Activated CD4-positive, alpha-beta T cell treated with anti-CD3 and anti-CD28 coated beads, Interleukin-2, amount 10 ng/mL, durations not matched to agents 24 days and 14 days (primary cell): ENCODE measurements at regions of chr1 and their contacts with region 1.

Region 1: GRCh38 chr1:26787706-26788514 is at the start of gene PIGV:
- DNase-seq: peak; percentile 97
- H3K4me3 Mint-ChIP-seq: peak within 1 kb of the TSS; percentile 100
- H3K27ac Mint-ChIP-seq: peak within 1 kb of the TSS; percentile 100
- H3K4me1 Mint-ChIP-seq: peaks cover 67% of the 10 kb centered on the region
- H3K27me3 Mint-ChIP-seq: no peaks in the 10 kb centered on the region
- total RNA-seq, gene PIGV: 15.2 and 16.0 TPM in 2 replicates

Region 2: GRCh38 chr1:26500488-26501175 is 287.3 kb before region 1 on chr1:
- intact Hi-C with region 1: loop called (anchors 2 kb)
- DNase-seq: peak; percentile 97
- H3K4me3 Mint-ChIP-seq: peak overlapping the region; percentile 92
- H3K27ac Mint-ChIP-seq: peak overlapping the region; percentile 95
- H3K4me1 Mint-ChIP-seq: peaks cover 13% of the 10 kb centered on the region
- H3K27me3 Mint-ChIP-seq: no peaks in the 10 kb centered on the region

Region 3: GRCh38 chr1:26602378-26602959 is 185.4 kb before region 1 on chr1:
- intact Hi-C with region 1: loop called (anchors 1 kb)
- DNase-seq: peak; percentile 89
- H3K4me3 Mint-ChIP-seq: no peak overlapping the region
- H3K27ac Mint-ChIP-seq: no peak overlapping the region
- H3K4me1 Mint-ChIP-seq: peaks cover 9% of the 10 kb centered on the region
- H3K27me3 Mint-ChIP-seq: peaks cover 3% of the 10 kb centered on the region

Region 4: DNA sequence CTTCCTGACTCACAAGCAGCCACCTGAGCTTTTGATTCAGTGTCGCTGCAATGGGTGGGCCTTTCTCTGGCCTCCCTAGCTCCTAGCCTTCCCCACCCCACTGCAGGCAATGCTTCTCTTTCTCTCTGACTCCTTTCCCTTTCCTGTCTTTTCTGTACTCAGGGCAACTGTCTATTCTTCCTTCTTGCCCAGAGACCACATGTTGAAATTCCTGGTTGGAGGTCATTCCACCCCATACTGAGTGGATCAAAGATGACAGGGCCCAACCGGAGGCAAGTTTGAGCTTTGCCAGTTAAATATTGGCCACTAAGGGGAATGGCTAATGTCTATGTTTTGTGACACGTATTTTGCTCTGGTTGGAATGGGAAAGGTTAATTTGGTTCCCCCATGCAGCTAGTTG is 157.3 kb before region 1 on chr1:
- intact Hi-C with region 1: no loop called
- DNase-seq: no peak
- H3K4me3 Mint-ChIP-seq: no peak overlapping the region
- H3K27ac Mint-ChIP-seq: no peak overlapping the region
- H3K4me1 Mint-ChIP-seq: no peaks in the 10 kb centered on the region
- H3K27me3 Mint-ChIP-seq: peaks cover 3% of the 10 kb centered on the region

Region 5: DNA sequence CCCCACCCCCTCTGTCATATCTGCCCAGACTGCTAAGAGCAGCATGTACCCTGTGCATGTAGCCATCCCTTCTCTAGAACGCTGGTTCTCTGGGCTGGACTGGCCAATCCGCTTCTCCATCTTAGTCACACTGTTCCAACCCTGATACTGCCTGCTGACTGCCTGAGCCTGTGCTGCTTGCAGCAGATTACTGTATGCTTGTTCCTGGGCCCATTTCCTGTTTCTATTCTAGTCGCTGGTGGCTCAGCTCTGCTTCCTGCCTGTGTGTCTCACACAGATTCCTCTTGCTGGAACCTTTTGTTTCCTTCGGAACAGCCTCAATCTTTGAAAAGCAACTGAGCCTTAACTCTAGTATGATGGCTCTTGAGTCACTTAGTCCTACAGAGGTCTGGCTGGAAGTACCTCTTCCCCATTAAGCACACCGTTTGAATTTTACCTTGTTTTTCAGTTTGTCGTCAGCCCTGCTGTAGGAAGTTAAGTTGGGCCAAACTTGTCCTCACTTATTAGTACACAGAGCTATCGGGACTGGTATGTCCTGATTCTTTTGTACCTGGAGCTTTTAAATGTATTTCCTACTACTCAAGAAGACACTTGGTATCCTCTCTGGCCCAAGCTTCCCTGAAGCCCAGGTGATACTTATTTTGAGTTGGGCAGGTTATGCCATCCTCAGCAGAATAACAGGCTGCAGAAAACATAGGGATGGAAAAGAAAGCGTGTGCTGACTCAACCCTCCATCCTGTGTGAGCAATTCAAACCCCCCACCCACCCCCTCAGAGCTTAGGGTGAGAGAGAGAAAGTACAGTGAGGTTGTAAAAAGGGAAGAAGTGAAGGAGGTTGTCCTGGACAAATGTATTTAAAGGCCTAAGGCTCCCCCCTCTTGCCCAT is 43.6 kb before region 1 on chr1:
- intact Hi-C with region 1: loop called (anchors 1 kb)
- DNase-seq: peak; percentile 95
- H3K4me3 Mint-ChIP-seq: peak overlapping the region; percentile 72
- H3K27ac Mint-ChIP-seq: peak overlapping the region; percentile 89
- H3K4me1 Mint-ChIP-seq: peaks cover 75% of the 10 kb centered on the region
- H3K27me3 Mint-ChIP-seq: no peaks in the 10 kb centered on the region

Region 6: DNA sequence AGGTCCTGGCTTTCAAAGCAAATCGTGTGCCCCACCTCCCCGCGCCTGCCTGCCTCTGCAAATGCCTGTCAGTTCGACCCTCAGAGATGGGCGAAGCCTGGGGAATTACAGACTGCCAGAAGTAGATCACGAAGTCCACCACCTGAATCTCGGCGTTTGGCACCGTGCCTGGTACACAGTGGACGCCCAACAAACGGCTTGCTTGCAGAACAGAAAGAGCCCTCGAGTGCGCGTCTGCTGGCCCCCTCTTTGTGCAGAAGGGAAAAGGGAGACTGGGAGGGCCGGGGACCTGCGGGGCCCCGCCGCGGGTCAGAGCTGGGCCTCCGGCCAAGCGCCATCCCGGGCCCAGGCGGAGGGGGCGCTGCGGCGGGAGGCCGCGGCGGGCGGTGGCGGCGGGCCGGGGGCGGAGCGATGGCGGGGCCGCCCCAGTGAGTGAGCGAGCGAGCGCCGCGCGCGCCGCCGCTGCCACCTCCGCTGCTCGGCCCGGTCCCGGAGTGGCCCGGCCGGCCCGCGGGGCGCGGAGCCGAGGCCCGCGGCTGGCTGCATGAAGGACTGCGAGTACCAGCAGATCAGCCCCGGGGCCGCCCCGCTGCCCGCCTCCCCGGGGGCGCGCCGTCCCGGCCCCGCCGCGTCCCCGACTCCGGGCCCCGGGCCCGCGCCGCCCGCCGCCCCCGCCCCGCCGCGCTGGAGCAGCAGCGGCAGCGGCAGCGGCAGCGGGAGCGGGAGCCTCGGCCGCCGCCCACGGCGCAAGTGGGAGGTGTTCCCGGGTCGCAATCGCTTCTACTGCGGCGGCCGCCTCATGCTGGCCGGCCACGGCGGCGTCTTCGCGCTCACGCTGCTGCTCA is 38.6 kb after region 1 on chr1 and contains the start of gene ZDHHC18:
- intact Hi-C with region 1: loop called (anchors 1 kb)
- DNase-seq: peak; percentile 95
- H3K4me3 Mint-ChIP-seq: peak within 1 kb of the TSS; percentile 94
- H3K27ac Mint-ChIP-seq: peak within 1 kb of the TSS; percentile 95
- H3K4me1 Mint-ChIP-seq: peaks cover 45% of the 10 kb centered on the region
- H3K27me3 Mint-ChIP-seq: no peaks in the 10 kb centered on the region
- total RNA-seq, gene ZDHHC18: 75.9 and 77.3 TPM in 2 replicates

Region 7: DNA sequence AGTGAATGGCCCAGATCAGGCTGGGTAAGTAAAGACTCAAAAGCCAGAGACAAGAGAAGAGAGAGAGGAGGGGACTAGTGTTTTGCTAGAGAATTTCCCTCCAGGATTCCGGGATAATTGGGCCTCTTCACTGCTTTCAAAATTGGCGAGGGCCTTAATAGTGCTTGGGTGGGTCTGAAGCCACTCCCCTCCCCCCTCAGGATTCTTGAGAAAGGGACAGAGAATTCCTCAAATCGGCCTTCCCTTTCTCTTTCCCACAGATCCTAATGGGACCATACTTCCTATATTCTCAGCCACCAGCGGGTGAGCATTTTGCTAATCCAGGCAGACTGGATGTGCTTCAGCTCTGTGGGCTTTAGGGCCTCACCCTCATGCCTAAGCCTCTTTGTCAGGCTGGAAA is 87.0 kb after region 1 on chr1:
- intact Hi-C with region 1: loop called (anchors 5 kb)
- DNase-seq: no peak
- H3K4me3 Mint-ChIP-seq: no peak overlapping the region
- H3K27ac Mint-ChIP-seq: no peak overlapping the region
- H3K4me1 Mint-ChIP-seq: peaks cover 2% of the 10 kb centered on the region
- H3K27me3 Mint-ChIP-seq: no peaks in the 10 kb centered on the region

Region 8: GRCh38 chr1:27416387-27417111 is 628.6 kb after region 1 on chr1:
- intact Hi-C with region 1: no loop called
- DNase-seq: peak; percentile 87
- H3K4me3 Mint-ChIP-seq: no peak overlapping the region
- H3K27ac Mint-ChIP-seq: peak overlapping the region; percentile 14
- H3K4me1 Mint-ChIP-seq: peaks cover 28% of the 10 kb centered on the region
- H3K27me3 Mint-ChIP-seq: no peaks in the 10 kb centered on the region